Calu3 (cell line): ENCODE measurements at regions of chr5 and their contacts with region 1.

Region 1: DNA sequence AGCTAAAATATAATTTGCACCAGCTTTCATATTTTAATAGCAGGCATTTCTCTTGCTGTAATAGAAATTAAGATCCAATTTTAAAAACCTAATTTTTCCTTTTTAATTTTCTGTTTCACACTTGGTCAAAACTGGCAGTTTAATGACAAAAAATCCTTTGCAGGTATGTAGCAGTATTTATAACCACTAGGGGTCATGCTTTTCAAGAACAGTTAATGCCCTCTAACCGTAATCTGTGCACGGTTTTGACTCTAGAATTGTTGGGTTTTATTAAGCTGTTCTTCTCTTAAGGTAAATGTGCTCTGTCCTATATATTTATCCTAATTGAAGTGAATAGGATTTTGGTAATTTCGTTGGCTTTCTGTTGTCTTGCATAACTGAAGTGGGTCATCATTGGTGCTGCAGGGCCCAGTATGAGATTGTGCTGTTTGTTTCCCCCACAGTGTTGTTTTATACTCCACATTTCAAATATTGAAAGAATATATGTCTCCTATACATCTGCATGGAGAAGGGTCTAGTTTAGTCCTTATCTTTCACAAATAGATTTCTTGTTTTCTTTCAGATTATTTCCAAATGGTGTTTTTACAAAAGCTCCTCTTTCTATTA is 107.4 kb downstream of the SCAMP1 start:
- DNase-seq: no peak
- H3K4me3 Mint-ChIP-seq: no peak overlapping the region
- H3K27ac Mint-ChIP-seq: no peak overlapping the region
- H3K4me1 Mint-ChIP-seq: peaks cover 16% of the 10 kb centered on the region
- H3K27me3 Mint-ChIP-seq: no peaks in the 10 kb centered on the region
- CTCF ChIP-seq: peak; percentile 66

Region 2: DNA sequence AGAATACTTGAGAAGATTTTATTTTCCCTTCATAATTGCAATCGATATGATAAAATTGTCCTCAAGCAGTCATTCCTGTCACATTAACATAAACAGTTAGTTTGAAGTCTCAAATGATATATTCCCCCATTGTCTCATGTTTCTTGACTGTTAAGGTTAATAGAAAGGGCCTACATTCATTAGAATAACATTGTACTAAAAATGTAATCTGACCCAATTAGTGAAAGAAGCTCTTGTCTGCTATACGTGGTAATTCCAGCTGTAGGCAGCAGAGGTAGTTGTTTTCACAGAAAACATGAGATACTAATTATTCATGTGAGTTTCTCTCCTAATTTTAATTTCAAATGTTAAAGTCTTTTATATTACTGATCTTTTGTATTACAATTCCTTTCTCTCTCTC is 147.5 kb before region 1 on chr5:
- CTCF ChIA-PET with region 1: interaction called, 6 read pairs
- intact Hi-C with region 1: loop called (anchors 1 kb)
- DNase-seq: peak; percentile 17
- H3K4me3 Mint-ChIP-seq: no peak overlapping the region
- H3K27ac Mint-ChIP-seq: no peak overlapping the region
- H3K4me1 Mint-ChIP-seq: no peaks in the 10 kb centered on the region
- H3K27me3 Mint-ChIP-seq: no peaks in the 10 kb centered on the region
- CTCF ChIP-seq: peak; percentile 39

Region 3: GRCh38 chr5:78405829-78406750 is 61.8 kb before region 1 on chr5:
- CTCF ChIA-PET with region 1: no interaction called
- intact Hi-C with region 1: loop called (anchors 10 kb)
- DNase-seq: no peak
- H3K4me3 Mint-ChIP-seq: no peak overlapping the region
- H3K27ac Mint-ChIP-seq: no peak overlapping the region
- H3K4me1 Mint-ChIP-seq: peaks cover 29% of the 10 kb centered on the region
- H3K27me3 Mint-ChIP-seq: no peaks in the 10 kb centered on the region
- CTCF ChIP-seq: no peak

Region 4: DNA sequence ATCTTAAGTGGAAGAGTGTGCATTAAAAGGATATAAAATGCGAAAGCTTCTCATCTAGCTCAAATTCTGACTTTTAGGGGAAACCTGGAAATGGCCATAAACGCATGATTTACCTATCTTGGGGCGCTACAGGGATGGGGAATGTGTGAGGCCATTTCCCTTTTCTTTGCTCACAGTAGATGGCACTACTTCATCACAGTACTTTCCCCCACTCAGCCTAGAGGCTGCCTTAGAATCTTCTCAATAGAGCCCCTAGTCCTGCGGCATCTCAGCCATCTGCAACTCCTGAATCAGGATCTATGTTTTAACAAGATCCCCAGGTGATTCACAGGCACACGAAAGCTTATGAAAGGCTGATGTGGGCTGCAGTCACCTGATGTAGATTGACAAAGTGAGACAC is 70.0 kb after region 1 on chr5:
- CTCF ChIA-PET with region 1: interaction called, 11 read pairs
- intact Hi-C with region 1: loop called (anchors 2 kb)
- DNase-seq: peak; percentile 42
- H3K4me3 Mint-ChIP-seq: no peak overlapping the region
- H3K27ac Mint-ChIP-seq: peak overlapping the region; percentile 25
- H3K4me1 Mint-ChIP-seq: peaks cover 13% of the 10 kb centered on the region
- H3K27me3 Mint-ChIP-seq: no peaks in the 10 kb centered on the region
- CTCF ChIP-seq: no peak

Region 5: DNA sequence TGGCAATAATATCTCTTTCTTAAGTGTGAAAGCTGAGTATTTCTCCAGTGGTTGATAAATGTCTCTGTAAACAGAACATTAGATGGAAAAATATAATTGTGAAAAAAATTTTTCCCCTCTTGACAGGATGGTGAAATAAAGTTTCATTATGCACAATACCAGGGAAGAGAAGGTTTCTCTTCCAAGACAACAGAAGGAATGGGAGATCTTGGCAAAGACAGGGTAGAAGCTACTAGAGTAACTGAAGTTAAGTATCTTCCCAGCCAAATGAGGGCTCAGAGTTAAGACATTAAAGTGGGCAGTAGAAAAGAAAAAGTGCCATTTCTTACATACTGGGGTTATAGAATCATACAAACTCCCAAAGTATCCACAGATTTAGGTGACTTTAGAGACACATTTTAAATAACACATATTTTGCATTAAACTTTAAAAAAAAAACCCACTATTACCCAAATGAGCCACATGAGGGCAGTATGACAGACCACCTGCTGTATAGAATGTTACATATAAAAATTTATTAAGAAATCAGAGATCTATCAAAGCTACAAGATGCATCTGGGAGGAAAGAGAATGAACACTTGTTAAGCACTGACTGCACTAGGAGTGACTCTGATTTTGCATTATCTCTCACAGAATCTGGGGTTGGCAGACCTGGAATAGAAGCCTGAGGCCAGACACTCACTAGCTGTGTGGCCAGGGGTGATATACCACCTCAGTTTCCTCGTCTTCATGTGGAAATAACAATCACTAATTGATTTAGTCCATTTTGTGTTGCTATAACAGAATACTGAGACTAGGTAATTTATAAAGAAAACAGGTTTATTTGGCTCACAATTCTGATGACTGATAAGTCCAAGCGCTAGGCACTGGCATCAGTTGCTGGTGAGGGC is 418.7 kb after region 1 on chr5:
- CTCF ChIA-PET with region 1: interaction called, 3 read pairs
- intact Hi-C with region 1: loop called (anchors 10 kb)
- DNase-seq: no peak
- H3K4me3 Mint-ChIP-seq: no peak overlapping the region
- H3K27ac Mint-ChIP-seq: no peak overlapping the region
- H3K4me1 Mint-ChIP-seq: no peaks in the 10 kb centered on the region
- H3K27me3 Mint-ChIP-seq: no peaks in the 10 kb centered on the region
- CTCF ChIP-seq: peak; percentile 74